Activated naive CD4-positive, alpha-beta T cell treated with anti-CD3 and anti-CD28 coated beads for 36 hours (primary cell): ENCODE measurements at regions of chr16 and their contacts with region 1.

Region 1: GRCh38 chr16:1863681-1864460 is 8.1 kb downstream of the MEIOB start:
- DNase-seq: no peak
- H3K4me3 Mint-ChIP-seq: no peak overlapping the region
- H3K27ac Mint-ChIP-seq: no peak overlapping the region
- H3K4me1 Mint-ChIP-seq: no peaks in the 10 kb centered on the region
- H3K27me3 Mint-ChIP-seq: no peaks in the 10 kb centered on the region

Region 2: DNA sequence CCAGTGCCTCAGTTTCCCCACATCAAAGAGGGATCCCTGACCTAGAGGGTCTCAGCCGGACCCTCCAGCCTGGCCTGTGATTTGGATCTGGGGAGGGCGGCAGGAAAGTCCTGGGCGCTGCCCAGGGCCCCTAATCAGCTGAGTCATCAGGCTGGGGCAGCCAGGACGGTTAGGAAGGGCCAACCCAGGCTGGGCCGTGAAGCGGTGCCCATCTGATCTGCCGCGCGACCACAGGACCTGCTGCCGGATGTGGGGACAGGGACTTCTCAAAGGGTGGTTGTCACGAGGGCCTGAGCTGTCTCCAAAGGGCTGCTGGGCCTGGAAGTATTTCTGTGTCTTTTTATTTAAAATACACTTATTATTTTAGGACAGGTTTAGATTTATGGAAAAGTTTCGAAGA is 619.0 kb before region 1 on chr16:
- CTCF ChIA-PET with region 1: no interaction called
- intact Hi-C with region 1: no loop called
- DNase-seq: no peak
- H3K4me3 Mint-ChIP-seq: no peak overlapping the region
- H3K27ac Mint-ChIP-seq: no peak overlapping the region
- H3K4me1 Mint-ChIP-seq: peaks cover 2% of the 10 kb centered on the region
- H3K27me3 Mint-ChIP-seq: peaks cover 3% of the 10 kb centered on the region

Region 3: GRCh38 chr16:1812732-1813163 is 51.1 kb before region 1 on chr16:
- CTCF ChIA-PET with region 1: no interaction called
- intact Hi-C with region 1: loop called (anchors 2 kb)
- DNase-seq: peak; percentile 80
- H3K4me3 Mint-ChIP-seq: no peak overlapping the region
- H3K27ac Mint-ChIP-seq: no peak overlapping the region
- H3K4me1 Mint-ChIP-seq: peaks cover 10% of the 10 kb centered on the region
- H3K27me3 Mint-ChIP-seq: no peaks in the 10 kb centered on the region

Region 4: DNA sequence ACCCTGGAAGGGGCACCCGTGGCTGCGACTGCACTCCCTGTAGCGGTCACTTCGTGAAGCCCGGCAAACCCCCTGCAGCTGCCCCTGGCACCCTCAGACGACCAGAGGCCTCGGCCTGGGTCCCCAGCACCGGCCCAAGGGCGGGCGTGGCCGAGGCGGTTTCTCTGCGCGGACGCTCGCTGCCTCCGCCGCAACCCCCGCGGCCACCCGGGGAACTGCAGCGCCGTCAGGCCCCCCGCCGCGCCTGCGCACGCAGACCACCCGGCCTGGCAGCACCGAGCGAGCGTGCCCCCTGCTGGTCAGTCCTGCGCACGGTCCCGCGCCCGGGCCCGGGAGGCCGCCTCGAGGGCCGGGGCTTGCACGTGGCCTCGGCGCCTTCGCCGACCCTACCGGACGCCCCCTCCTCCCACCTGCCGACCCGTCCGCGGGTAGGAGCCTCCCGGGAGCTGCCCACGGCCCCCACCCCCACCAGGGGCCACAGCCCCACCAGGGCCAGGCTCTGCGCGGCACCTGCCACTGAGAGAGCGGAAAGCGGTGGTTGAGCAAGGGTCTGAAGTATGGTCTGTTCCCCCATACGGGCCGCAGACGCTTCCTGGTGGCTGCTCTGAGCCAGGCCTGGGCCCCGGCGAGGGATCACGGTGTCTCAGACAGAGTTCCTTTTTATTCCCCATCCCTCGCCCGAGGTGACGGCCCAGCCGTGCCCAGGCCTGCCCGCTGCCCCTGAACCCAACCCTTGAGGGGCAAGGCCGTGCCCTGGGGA is 65.9 kb after region 1 on chr16:
- CTCF ChIA-PET with region 1: interaction called, 7 read pairs
- intact Hi-C with region 1: loop called (anchors 1 kb)
- DNase-seq: peak; percentile 91
- H3K4me3 Mint-ChIP-seq: peak overlapping the region; percentile 61
- H3K27ac Mint-ChIP-seq: no peak overlapping the region
- H3K4me1 Mint-ChIP-seq: no peaks in the 10 kb centered on the region
- H3K27me3 Mint-ChIP-seq: no peaks in the 10 kb centered on the region

Region 5: GRCh38 chr16:2009789-2010510 is 146.1 kb after region 1 on chr16 and contains the start of gene ZNF598:
- CTCF ChIA-PET with region 1: no interaction called
- intact Hi-C with region 1: loop called (anchors 5 kb)
- DNase-seq: peak; percentile 77
- H3K4me3 Mint-ChIP-seq: peak within 1 kb of the TSS; percentile 88
- H3K27ac Mint-ChIP-seq: peak within 1 kb of the TSS; percentile 89
- H3K4me1 Mint-ChIP-seq: peaks cover 39% of the 10 kb centered on the region
- H3K27me3 Mint-ChIP-seq: no peaks in the 10 kb centered on the region
- total RNA-seq, gene ZNF598: 88.8 to 93.5 TPM